ENCODE measurements at regions of chr4 and their contacts with region 1.

Region 1: DNA sequence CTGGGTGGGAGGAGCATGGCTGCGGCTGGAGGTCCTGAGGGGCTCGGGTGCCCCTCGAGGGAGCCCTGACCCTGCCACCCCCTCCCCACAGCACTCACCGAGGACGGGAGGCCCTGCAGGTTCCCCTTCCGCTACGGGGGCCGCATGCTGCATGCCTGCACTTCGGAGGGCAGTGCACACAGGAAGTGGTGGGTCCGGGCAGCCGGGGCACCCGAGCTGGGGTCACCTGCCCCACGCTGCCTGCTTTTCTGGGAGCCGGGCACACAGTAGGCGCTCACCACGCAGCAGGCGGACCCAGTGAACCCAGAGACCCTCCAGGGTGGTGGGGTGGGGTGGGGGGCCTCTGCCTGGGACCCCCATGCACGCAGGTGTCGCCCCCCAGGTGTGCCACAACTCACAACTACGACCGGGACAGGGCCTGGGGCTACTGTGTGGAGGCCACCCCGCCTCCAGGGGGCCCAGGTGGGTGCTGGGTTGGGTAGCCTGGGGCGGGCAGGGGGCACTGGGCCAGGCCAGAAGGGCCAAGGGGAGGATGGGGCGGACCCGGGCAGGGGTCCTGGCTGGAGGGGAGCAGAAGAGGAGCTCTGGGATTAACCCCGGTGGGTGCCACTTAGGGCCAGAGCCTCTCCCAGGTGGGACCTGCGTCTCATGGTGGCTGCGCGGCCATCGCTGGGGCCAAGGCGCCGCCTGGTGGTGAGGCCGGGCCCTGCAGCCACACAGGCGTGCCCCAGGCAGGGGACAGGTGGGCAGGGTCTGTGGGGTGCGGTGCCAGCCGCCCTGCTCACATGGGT is 1.4 kb downstream of the HGFAC start:
- DNase-seq: no peak
- H3K4me3 ChIP-seq: no peak overlapping the region
- H3K27ac ChIP-seq: no peak overlapping the region
- H3K4me1 ChIP-seq: peaks cover 0 to 17% (median 7%) of the 10 kb centered on the region in 4 donors
- H3K27me3 ChIP-seq: no peaks in the 10 kb centered on the region
- CTCF ChIP-seq: peak; percentile 98 to 100

Region 2: GRCh38 chr4:3106339-3107186 is 336.6 kb before region 1 on chr4:
- intact Hi-C with region 1: loop called (anchors 10 kb)
- DNase-seq: peak; percentile 89 to 93
- H3K4me3 ChIP-seq: no peak overlapping the region
- H3K27ac ChIP-seq: peak overlapping the region in 1 of 2 donors; percentile 32
- H3K4me1 ChIP-seq: peaks cover 0 to 12% (median under 1%) of the 10 kb centered on the region in 4 donors
- H3K27me3 ChIP-seq: no peaks in the 10 kb centered on the region
- CTCF ChIP-seq: peak; percentile 94 to 98

Region 3: DNA sequence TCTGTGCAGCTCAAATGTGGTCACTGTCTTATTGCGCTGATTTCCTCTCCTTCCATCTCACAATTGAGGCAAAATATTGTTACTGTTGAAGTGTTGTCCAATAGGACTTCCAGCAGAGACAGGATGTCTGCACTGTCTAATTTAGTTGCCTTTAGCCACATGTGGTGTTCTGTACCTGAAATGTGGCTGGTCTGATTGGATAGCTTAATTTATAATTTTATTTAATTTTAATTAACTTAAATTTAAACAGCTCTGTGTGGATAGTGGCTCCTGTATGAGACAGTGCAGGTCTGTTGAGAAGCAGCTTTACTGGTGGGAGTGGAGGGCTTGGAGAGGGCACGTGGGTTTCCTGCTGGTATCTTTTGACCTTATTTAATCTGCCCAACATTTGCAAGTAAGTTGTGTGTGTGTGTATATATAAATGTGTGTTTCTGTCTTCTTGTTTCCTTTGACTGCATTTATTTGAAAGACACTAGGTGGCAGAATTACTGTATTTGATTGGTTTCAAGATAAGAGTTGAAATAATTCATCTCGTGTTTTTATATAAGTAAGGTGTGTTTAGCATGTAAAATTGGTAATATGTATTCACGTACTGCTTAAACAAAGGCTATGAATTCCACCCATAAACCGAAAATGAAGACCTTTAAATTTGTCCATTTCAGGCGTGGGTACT is 249.5 kb before region 1 on chr4:
- intact Hi-C with region 1: loop called (anchors 10 kb)
- DNase-seq: no peak
- H3K4me3 ChIP-seq: no peak overlapping the region
- H3K27ac ChIP-seq: no peak overlapping the region
- H3K4me1 ChIP-seq: no peaks in the 10 kb centered on the region
- H3K27me3 ChIP-seq: no peaks in the 10 kb centered on the region
- CTCF ChIP-seq: peak in 1 of 2 experiments; percentile 18

Region 4: GRCh38 chr4:3346146-3346545 is 97.0 kb before region 1 on chr4:
- intact Hi-C with region 1: loop called (anchors 1 kb)
- DNase-seq: peak in 1 of 2 donors; percentile 58
- H3K4me3 ChIP-seq: no peak overlapping the region
- H3K27ac ChIP-seq: no peak overlapping the region
- H3K4me1 ChIP-seq: peaks cover 0 to 3% (median 0%) of the 10 kb centered on the region in 4 donors
- H3K27me3 ChIP-seq: no peaks in the 10 kb centered on the region
- CTCF ChIP-seq: peak; percentile 89 to 94

Region 5: DNA sequence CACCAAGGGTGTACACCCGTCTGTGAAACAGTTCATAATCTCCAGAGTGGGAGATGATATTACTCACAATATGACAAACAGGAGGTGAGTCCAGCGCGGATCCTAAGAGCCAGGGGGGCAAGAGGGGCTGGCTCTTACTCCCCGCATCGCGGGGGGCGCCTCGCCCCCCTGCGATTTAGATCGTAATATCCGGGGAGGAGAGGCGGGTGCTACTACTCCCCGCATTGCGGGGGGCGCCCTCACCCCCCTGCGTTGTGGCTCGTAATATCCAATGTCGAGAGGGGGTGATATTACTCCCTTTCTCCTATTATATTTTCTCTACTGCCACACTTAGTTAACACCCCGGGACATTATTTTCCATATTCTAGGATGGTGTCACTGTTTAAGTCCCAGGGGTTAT is 454.9 kb after region 1 on chr4:
- intact Hi-C with region 1: no loop called
- DNase-seq: no peak
- H3K4me3 ChIP-seq: no peak overlapping the region
- H3K27ac ChIP-seq: no peak overlapping the region
- H3K4me1 ChIP-seq: no peaks in the 10 kb centered on the region
- H3K27me3 ChIP-seq: peaks cover 0 to 16% of the 10 kb centered on the region in 2 donors
- CTCF ChIP-seq: no peak